H1 (cell line): ENCODE measurements at regions of chr9 and their contacts with region 1.

Region 1: DNA sequence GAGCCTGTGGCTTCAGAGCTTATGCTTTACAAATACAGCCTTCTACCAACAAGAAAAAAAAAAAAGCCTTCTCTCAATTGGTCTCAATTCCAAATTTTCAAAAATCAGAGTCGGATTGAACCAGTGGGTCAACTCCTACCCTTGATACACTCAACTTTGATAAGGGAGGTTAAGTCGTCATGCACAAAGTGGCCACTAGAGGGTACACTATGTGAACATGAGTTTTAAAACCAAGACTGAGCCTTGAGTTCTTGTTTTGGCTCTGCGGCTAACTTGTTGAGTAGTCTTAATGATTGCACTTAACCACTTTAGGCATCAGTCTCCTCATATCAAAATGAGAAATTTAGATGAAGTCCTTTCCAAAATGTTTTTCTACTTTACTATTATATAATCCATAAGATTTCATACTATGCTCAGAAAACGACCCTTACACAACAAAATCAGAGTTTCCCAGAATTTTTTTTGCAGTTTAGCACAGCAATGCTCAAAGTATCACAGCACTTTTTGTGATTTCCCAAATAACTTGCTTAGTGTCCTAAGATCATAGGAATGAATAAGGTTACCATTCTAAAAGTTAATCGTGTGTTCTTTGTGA is 92.9 kb upstream of the MTAP start:
- DNase-seq: peak in 1 of 2 experiments; percentile 84
- H3K4me3 ChIP-seq: no peak overlapping the region
- H3K27ac ChIP-seq: no peak overlapping the region
- H3K4me1 ChIP-seq: no peaks in the 10 kb centered on the region
- H3K27me3 ChIP-seq: no peaks in the 10 kb centered on the region
- CTCF ChIP-seq: peak in 2 of 3 experiments; percentile 67 to 83; a peak in 3 of 4 replicates
- EP300 ChIP-seq: no peak
- POLR2A ChIP-seq: no peak
- RAD21 ChIP-seq: peak; percentile 63 to 67

Region 2: DNA sequence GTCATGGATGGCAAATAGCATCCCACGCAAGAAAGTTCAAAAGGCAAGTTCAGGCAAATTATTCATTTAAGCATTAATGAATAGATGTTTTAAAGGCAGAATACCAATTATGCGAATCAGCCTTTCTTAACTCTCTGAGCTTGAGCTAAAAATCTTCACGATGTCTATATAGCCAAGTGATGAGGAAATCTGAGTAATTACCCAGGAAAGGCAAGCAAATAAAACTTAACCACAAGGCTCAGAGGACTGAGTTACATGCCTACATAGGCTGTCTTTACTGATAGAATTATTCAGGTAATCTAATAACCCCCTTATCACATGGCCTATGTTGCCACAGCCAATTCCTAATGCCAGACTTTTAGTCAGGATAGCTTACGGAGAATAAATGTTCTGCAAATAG is 27.9 kb before region 1 on chr9:
- CTCF ChIA-PET with region 1: interaction called, 11 read pairs
- POLR2A ChIA-PET with region 1: no interaction called
- DNase-seq: no peak
- H3K4me3 ChIP-seq: no peak overlapping the region
- H3K27ac ChIP-seq: no peak overlapping the region
- H3K4me1 ChIP-seq: no peaks in the 10 kb centered on the region
- H3K27me3 ChIP-seq: no peaks in the 10 kb centered on the region
- CTCF ChIP-seq: no peak
- EP300 ChIP-seq: no peak
- POLR2A ChIP-seq: no peak
- RAD21 ChIP-seq: no peak

Region 3: GRCh38 chr9:21688108-21689102 is 21.2 kb before region 1 on chr9:
- CTCF ChIA-PET with region 1: interaction called, 10 read pairs
- POLR2A ChIA-PET with region 1: no interaction called
- DNase-seq: no peak
- H3K4me3 ChIP-seq: no peak overlapping the region
- H3K27ac ChIP-seq: no peak overlapping the region
- H3K4me1 ChIP-seq: no peaks in the 10 kb centered on the region
- H3K27me3 ChIP-seq: no peaks in the 10 kb centered on the region
- CTCF ChIP-seq: no peak
- EP300 ChIP-seq: no peak
- POLR2A ChIP-seq: no peak
- RAD21 ChIP-seq: no peak

Region 4: DNA sequence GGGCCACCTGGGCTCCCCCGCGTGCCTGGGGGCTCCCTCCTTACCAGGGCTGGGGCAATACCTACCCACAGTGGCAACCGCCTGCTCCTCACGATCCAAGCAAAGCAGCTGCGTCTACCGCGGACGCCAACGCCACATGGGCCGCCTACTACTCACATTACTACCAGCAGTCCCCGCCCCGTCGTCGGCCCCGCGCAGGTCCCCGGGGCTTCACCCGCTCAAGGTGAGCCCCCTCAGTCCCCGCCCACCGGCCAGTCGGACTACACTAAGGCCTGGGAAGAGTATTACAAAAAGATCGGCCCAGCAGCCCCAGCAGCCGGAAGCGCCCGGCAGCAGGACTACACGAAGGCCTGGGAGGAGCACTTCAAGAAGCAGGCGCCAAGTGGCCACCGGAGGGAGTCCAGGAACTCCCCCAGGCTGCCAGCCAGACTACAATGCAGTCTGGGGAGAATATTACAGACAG is 13.1 kb before region 1 on chr9:
- CTCF ChIA-PET with region 1: interaction called, 12 read pairs
- POLR2A ChIA-PET with region 1: no interaction called
- DNase-seq: peak; percentile 59 to 85
- H3K4me3 ChIP-seq: peak overlapping the region in 2 of 4 experiments; percentile 13 to 40; a peak in 3 of 8 replicates
- H3K27ac ChIP-seq: no peak overlapping the region
- H3K4me1 ChIP-seq: peaks cover 0 to 2% (median 0%) of the 10 kb centered on the region in 4 experiments; a peak in 1 of 7 replicates
- H3K27me3 ChIP-seq: no peaks in the 10 kb centered on the region
- CTCF ChIP-seq: peak; percentile 42 to 70 (median 45)
- EP300 ChIP-seq: no peak
- POLR2A ChIP-seq: no peak
- RAD21 ChIP-seq: peak; percentile 37 to 54

Region 5: DNA sequence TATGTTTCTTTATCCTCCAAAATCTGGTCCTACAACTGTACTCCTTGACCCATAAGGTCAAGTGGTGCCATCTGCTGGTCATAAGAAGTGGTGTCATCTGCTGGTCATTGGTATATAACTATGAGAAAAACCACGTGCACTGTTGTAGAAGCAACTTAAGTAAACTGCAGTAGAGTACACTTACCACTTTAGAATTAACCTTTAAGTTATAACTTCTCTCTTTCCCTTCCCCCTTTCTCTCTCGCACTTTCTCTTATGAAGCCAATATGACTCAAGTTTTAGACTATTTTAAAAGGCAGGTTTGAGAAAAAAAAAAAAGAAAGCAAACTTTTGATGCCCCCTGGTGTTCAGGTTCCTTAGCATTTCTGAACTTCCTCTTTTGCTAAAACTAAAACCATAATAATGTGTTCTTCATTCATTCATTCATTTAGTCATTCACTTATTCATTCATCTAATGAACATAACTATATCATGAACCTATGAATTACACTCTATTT is 80.0 kb after region 1 on chr9:
- CTCF ChIA-PET with region 1: interaction called, 15 read pairs
- POLR2A ChIA-PET with region 1: no interaction called
- DNase-seq: no peak
- H3K4me3 ChIP-seq: peak overlapping the region in 1 of 4 experiments; percentile 44; a peak in 1 of 8 replicates
- H3K27ac ChIP-seq: no peak overlapping the region
- H3K4me1 ChIP-seq: no peaks in the 10 kb centered on the region
- H3K27me3 ChIP-seq: 0 out of 7 replicates have a peak, but pooled peaks cover 0 to 2% (median 0%) of the 10 kb centered on the region in 4 experiments
- CTCF ChIP-seq: peak in 2 of 3 experiments; percentile 72 to 80; a peak in 3 of 4 replicates
- EP300 ChIP-seq: no peak
- POLR2A ChIP-seq: no peak
- RAD21 ChIP-seq: peak; percentile 81 to 86